ENCODE measurements at regions of chr3 and their contacts with region 1.

Region 1: DNA sequence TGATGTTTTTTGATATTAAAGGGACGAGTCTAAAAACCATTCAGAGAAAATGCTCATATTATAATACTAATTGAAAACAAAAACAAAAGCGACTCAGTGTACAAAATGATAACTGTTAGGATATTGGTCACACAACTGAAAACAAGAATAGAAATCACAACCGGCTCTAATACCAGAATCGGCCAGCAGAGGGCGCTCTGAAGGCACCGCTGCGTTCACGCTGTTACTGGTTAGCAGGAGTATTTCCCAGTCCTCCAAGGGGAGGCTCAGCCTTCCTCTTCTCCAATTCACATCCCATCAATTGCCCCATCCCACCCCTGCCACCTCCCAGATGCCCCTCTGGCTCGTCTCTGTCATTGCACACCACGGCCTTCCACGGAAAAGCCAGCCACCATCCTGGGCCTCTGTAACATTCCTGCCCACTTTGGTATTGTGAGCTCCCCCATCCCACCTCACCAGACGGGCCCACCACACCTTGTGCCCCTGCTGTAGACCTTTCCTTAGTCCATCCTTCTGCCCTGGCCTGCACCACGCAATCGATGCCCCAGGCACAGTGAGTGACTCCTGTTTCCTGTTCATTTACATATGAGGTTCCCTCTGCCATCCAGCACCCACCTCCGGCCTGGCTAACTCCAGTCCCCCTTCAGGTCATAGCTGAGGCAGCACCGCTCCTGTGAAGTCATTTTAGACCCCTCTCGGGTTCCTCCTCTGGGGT is 8.5 kb downstream of the FAM107A start:
- DNase-seq: peak; percentile 29
- H3K27ac ChIP-seq: no peak overlapping the region
- CTCF ChIP-seq: peak; percentile 91

Region 2: GRCh38 chr3:58463181-58463941 is 105.4 kb before region 1 on chr3:
- CTCF ChIA-PET with region 1: no interaction called
- POLR2A ChIA-PET with region 1: no interaction called
- DNase-seq: peak; percentile 86
- H3K27ac ChIP-seq: peak overlapping the region; percentile 70
- CTCF ChIP-seq: peak; percentile 95

Region 3: DNA sequence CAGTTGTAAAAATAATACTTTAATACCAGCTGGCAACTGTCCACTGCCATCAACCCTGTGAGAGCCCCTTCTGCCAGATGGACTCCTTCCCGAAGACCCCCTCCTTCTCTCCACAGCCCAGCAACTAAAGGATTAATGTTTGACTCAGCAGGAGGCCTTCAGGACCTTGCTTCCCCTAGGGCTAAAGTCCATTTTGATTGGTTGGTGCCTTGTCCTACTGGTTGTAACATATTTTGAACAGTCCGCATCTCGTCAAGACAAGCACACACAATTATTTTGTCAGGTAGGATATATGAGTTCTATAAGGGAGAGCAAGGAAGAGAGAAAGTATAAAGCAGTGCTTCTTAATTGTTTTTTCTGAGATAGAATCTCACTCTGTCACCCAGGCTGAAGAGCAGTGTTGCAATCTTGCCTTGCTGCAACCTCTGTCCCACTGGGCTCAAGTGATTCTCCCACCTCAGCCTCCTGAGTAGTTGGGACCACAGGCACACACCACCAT is 50.4 kb before region 1 on chr3:
- CTCF ChIA-PET with region 1: interaction called, 10 read pairs
- POLR2A ChIA-PET with region 1: no interaction called
- DNase-seq: no peak
- H3K27ac ChIP-seq: no peak overlapping the region
- CTCF ChIP-seq: no peak

Region 4: DNA sequence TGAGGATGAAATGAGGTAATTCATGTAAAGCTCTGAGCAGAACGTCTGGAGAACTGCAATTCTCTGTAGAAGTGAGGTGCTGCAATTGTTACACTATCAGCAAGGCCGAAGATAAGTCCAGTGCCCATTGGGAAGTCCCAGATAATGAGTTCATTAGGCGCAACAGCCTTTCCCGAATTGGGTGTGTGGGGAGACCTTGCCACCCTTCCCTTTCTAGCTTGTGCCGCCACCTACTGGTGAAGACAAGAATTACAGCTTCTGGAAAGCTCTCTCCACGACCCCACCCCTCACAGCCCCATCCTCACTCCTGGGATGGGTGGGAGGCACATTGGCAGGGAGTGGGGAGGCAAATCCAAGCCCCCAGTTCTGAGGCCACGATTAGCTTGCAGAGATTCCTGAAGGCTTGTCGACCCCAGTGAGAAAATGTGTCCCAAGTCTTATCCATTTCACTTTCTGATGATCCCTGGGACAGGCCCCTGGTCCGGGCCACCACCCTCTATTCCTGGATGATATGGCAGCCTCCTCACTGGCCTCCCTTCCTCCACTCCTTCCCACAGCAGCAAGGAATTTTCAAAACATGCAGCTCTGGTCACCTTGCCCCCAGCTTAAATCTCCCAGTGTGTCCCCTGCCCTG is 61.5 kb after region 1 on chr3:
- CTCF ChIA-PET with region 1: interaction called, 19 read pairs
- POLR2A ChIA-PET with region 1: no interaction called
- DNase-seq: peak; percentile 58
- H3K27ac ChIP-seq: no peak overlapping the region
- CTCF ChIP-seq: peak; percentile 90